ENCODE measurements at regions of chr10 and their contacts with region 1.

Region 1: GRCh38 chr10:8365935-8366911 is 311.7 kb downstream of the GATA3 start:
- DNase-seq: peak; percentile 94 to 98
- H3K4me3 ChIP-seq: peak overlapping the region; percentile 34; the same call in 1 of the 2 replicates
- H3K27ac ChIP-seq: peak overlapping the region; percentile 98
- H3K4me1 ChIP-seq: peaks cover 30% of the 10 kb centered on the region
- H3K27me3 ChIP-seq: no peaks in the 10 kb centered on the region
- CTCF ChIP-seq: no peak

Region 2: GRCh38 chr10:8053446-8054290 is 312.6 kb before region 1 on chr10:
- CTCF ChIA-PET with region 1: no interaction called
- POLR2A ChIA-PET with region 1: no interaction called
- intact Hi-C with region 1: loop called (anchors 1 kb)
- DNase-seq: peak; percentile 52 to 87
- H3K4me3 ChIP-seq: peak overlapping the region; percentile 59
- H3K27ac ChIP-seq: peak overlapping the region; percentile 87
- H3K4me1 ChIP-seq: no peaks in the 10 kb centered on the region
- H3K27me3 ChIP-seq: no peaks in the 10 kb centered on the region
- CTCF ChIP-seq: no peak; the same call in 1 of the 2 replicates

Region 3: DNA sequence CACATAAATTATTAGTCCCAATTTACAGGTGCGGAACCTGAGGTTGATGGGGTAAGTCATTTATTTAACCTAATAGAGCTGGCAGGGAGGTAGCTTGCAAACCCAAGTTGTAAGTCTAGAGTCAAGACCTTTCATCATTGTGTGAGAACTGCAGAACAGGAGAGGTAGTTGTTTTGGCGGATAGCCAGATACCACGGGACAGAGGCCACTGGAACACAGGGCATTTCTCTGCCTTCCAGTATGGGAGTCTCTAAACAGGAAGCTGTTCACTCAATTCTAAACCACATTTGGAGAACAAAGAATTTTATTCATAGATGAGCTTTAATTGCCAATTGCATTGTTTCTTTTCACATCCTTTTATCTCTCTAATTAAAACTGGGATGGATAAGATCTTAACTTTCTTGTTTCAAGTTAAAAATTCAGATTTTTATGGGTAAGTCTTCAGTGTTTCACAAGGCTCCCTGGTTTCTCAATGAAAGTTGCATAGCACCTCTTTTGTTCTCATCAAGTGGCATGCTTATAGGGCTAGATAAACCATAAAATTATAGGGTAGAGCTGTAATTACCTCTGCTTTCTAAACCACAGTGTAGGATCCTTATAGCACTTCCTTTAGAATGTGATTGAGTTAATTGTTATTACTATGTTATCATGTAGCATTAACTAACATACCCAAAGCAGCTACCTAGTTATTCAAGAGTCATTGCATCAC is 177.3 kb after region 1 on chr10:
- CTCF ChIA-PET with region 1: no interaction called
- POLR2A ChIA-PET with region 1: interaction called, 7 read pairs
- intact Hi-C with region 1: loop called (anchors 1 kb)
- DNase-seq: peak; percentile 68 to 85
- H3K4me3 ChIP-seq: no peak overlapping the region; the same call in 1 of the 2 replicates
- H3K27ac ChIP-seq: peak overlapping the region; percentile 99
- H3K4me1 ChIP-seq: peaks cover 39% of the 10 kb centered on the region
- H3K27me3 ChIP-seq: no peaks in the 10 kb centered on the region
- CTCF ChIP-seq: no peak

Region 4: DNA sequence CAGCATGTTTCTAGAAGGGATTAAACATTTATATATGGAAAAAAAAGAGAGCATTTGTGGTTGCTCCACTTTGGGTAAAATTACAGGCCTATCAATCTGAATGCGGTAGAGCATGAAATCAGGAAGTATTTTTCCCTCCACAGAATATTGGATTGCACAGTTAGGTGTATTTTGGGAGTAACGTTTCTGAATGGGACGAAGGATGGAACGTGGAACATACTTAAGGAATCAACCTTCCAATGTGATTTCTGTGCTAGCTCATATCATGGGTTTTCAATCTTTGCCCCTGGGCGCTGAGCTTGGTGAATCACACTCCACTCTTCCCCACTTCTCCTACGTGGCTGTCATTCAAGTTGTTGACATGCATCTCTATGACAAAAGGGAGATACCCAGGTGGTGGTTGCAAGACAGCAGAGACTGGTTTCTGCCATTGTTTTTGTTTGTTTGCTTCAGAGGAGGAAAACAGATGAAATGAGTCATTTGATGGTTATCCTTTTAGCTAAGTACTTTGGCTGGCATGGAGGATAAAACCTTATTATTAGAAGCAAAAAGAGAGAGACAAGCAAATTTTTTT is 262.1 kb after region 1 on chr10:
- CTCF ChIA-PET with region 1: no interaction called
- POLR2A ChIA-PET with region 1: no interaction called
- intact Hi-C with region 1: loop called (anchors 1 kb)
- DNase-seq: peak; percentile 88 to 97
- H3K4me3 ChIP-seq: no peak overlapping the region
- H3K27ac ChIP-seq: peak overlapping the region; percentile 88
- H3K4me1 ChIP-seq: peaks cover 25% of the 10 kb centered on the region
- H3K27me3 ChIP-seq: no peaks in the 10 kb centered on the region
- CTCF ChIP-seq: no peak

Region 5: DNA sequence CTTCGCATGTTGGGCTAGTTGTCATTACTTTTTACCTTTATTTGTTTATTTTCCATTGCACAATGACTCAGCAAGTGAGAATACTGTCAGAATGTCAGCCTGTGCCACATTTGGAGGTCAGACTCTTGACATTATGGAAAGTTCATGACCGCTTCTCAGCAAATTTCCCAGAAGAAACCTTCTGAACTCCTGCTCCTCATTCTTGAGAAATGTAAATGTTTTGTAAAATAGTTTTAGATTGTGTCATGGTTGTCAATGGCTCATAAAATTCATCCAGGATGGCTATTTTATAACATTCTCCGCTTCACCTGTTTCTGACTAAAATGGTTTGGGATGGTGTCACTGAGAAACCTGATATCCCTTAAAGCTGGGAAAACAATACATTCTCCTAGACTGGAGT is 359.8 kb after region 1 on chr10:
- CTCF ChIA-PET with region 1: no interaction called
- POLR2A ChIA-PET with region 1: interaction called, 3 read pairs
- intact Hi-C with region 1: loop called (anchors 1 kb)
- DNase-seq: peak; percentile 31 to 92
- H3K4me3 ChIP-seq: no peak overlapping the region
- H3K27ac ChIP-seq: peak overlapping the region; percentile 99
- H3K4me1 ChIP-seq: peaks cover 46% of the 10 kb centered on the region
- H3K27me3 ChIP-seq: no peaks in the 10 kb centered on the region
- CTCF ChIP-seq: no peak

Measured in PC-9 (cell line).